Activated B cell treated with CpG ODN at 0.5 μM for 24 hours (primary cell): ENCODE measurements at regions of chr12 and their contacts with region 1.

Region 1: DNA sequence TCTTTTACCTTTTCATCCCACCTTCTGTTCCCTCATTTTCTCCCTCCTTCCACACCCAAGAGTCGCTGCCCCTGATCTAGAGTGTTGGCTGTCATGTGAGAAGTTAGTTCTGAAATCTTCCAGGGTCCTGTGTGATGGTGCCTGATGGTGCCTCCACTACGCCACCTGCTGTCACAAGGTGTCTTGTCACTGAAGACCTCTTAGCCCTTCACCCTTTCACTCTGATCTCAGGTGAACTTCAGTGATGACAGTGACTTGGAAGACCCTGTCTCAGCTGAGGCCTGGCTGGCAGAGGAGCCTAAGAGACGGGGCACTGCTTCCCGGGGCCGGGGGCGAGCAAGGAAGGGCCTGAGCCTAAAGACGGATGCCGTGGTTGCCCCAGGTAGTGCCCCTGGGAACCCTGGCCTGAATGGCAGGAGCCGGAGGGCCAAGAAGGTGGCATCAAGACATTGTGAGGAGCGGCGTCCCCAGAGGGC is 7.6 kb upstream of the PFDN5 start:
- DNase-seq: peak; percentile 53
- ATAC-seq: peak; percentile 100
- H3K4me3 Mint-ChIP-seq: no peak overlapping the region
- H3K27ac Mint-ChIP-seq: no peak overlapping the region
- H3K4me1 Mint-ChIP-seq: peaks cover 4% of the 10 kb centered on the region
- H3K27me3 Mint-ChIP-seq: no peaks in the 10 kb centered on the region
- CTCF ChIP-seq: no peak

Region 2: DNA sequence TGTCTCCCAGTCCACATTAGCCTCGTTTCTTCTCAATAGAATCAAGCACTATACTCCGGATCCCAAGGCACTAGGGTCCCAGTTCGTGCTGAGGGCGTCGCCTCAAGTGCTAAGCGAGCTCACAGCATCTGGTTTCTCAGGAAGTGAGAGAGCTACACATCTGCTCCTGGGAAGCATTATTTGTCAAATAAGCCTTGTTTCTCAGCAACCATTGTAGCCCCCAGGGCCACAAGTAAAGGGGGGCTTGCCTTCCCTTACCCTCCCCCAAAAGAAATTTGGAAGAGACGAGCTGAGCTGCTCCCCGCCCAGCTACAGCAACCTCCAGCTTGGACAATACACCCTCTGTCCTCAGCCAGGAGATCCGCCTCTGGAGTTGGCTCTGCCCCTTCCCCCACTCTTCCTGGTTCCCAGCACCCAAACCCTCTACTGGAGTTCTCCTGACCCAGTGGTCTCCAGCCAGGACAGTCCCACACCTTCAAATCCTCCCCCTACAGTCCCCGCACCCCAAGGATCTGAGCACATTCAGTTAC is 243.7 kb before region 1 on chr12:
- CTCF ChIA-PET with region 1: no interaction called
- POLR2A ChIA-PET with region 1: no interaction called
- intact Hi-C with region 1: no loop called
- DNase-seq: no peak
- ATAC-seq: no peak
- H3K4me3 Mint-ChIP-seq: no peak overlapping the region
- H3K27ac Mint-ChIP-seq: no peak overlapping the region
- H3K4me1 Mint-ChIP-seq: peaks cover 7% of the 10 kb centered on the region
- H3K27me3 Mint-ChIP-seq: no peaks in the 10 kb centered on the region
- CTCF ChIP-seq: no peak

Region 3: GRCh38 chr12:53213348-53213747 is 74.4 kb before region 1 on chr12:
- CTCF ChIA-PET with region 1: interaction called, 298 read pairs
- POLR2A ChIA-PET with region 1: interaction called, 33 read pairs
- intact Hi-C with region 1: loop called (anchors 1 kb)
- DNase-seq: peak; percentile 82
- ATAC-seq: peak; percentile 75
- H3K4me3 Mint-ChIP-seq: no peak overlapping the region
- H3K27ac Mint-ChIP-seq: peak overlapping the region; percentile 6
- H3K4me1 Mint-ChIP-seq: peaks cover 76% of the 10 kb centered on the region
- H3K27me3 Mint-ChIP-seq: no peaks in the 10 kb centered on the region
- CTCF ChIP-seq: peak; percentile 49